PC-3 (cell line): ENCODE measurements at regions of chr13 and their contacts with region 1.

Region 1: GRCh38 chr13:38530492-38530891 is 156.4 kb upstream of the FREM2 start:
- DNase-seq: peak; percentile 33
- ATAC-seq: peak; percentile 65; the same call in 1 of the 2 replicates
- H3K4me3 ChIP-seq: no peak overlapping the region
- H3K27ac ChIP-seq: no peak overlapping the region
- H3K4me1 ChIP-seq: no peaks in the 10 kb centered on the region
- H3K27me3 ChIP-seq: peaks cover 36% of the 10 kb centered on the region
- CTCF ChIP-seq: peak; percentile 67

Region 2: GRCh38 chr13:37640499-37640898 is 890.0 kb before region 1 on chr13:
- CTCF ChIA-PET with region 1: no interaction called
- POLR2A ChIA-PET with region 1: no interaction called
- intact Hi-C with region 1: loop called (anchors 1 kb)
- DNase-seq: peak; percentile 58
- ATAC-seq: peak; percentile 80
- H3K4me3 ChIP-seq: no peak overlapping the region
- H3K27ac ChIP-seq: no peak overlapping the region
- H3K4me1 ChIP-seq: no peaks in the 10 kb centered on the region
- H3K27me3 ChIP-seq: peaks cover 18% of the 10 kb centered on the region
- CTCF ChIP-seq: peak; percentile 72

Region 3: GRCh38 chr13:37869756-37870488 is 660.6 kb before region 1 on chr13 and contains the start of gene TRPC4:
- CTCF ChIA-PET with region 1: no interaction called
- POLR2A ChIA-PET with region 1: no interaction called
- intact Hi-C with region 1: loop called (anchors 5 kb)
- DNase-seq: peak; percentile 54
- ATAC-seq: peak; percentile 83
- H3K4me3 ChIP-seq: peak within 1 kb of the TSS; percentile 62
- H3K27ac ChIP-seq: no peak within 1 kb of the TSS
- H3K4me1 ChIP-seq: peaks cover 15% of the 10 kb centered on the region
- H3K27me3 ChIP-seq: peaks cover 72% of the 10 kb centered on the region
- CTCF ChIP-seq: peak; percentile 60
- total RNA-seq, gene TRPC4: 0.22 TPM in 1 of 2 replicates, not detected in the other

Region 4: DNA sequence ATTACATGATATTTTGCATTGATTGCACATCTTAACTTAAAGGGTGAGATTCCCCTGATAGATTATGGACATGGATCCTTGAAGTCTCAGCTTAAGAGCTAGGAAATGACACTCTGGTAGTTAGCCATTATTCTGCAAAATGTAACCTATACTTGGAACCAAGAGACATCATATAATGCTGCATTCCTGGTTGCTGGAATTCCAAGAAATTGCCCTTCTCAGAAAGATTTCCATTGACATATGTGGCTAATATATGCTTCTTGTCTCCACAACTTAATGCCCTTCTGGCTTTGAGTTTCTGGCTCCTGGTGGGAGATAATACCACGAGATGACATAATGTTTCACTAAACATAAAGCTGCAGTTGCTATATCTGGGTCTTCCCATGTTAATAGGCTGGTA is 456.6 kb before region 1 on chr13:
- CTCF ChIA-PET with region 1: no interaction called
- POLR2A ChIA-PET with region 1: no interaction called
- intact Hi-C with region 1: loop called (anchors 1 kb)
- DNase-seq: no peak
- ATAC-seq: no peak
- H3K4me3 ChIP-seq: no peak overlapping the region
- H3K27ac ChIP-seq: no peak overlapping the region
- H3K4me1 ChIP-seq: no peaks in the 10 kb centered on the region
- H3K27me3 ChIP-seq: no peaks in the 10 kb centered on the region
- CTCF ChIP-seq: no peak

Region 5: DNA sequence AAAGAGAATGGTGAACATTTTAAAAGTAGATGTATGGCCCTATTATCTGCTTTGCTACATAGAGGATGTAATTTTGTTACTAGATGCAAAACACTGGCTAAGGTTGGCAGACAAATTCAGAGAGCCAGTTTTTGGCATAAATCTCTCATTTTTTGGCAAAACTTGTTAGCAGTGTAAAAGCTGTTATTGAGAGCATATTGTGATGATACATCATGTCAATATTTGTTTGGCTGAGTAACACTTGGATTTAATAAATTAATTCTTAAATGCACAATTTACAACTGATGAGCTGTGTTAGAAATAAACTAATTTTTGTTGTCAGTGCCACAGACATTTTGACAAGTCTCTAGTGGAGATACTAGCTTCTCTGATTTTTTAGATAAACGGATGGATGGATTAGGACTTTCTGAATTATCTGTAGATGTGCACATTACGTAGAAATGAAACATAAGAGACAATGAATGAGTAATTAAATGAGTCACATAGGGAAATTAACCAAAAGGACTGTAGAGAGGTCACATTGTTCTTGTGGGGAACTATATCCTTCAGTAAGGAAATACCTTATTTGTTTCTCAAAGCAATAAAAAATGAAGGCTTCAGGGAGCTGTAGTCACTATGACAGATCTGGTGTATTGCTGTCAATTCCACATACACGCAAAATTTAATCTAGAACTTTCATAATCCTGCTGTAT is 163.4 kb before region 1 on chr13:
- CTCF ChIA-PET with region 1: no interaction called
- POLR2A ChIA-PET with region 1: no interaction called
- intact Hi-C with region 1: loop called (anchors 5 kb)
- DNase-seq: peak; percentile 79
- ATAC-seq: peak; percentile 95
- H3K4me3 ChIP-seq: peak overlapping the region; percentile 21; the same call in 1 of the 2 replicates
- H3K27ac ChIP-seq: peak overlapping the region; percentile 97
- H3K4me1 ChIP-seq: peaks cover 22% of the 10 kb centered on the region
- H3K27me3 ChIP-seq: no peaks in the 10 kb centered on the region
- CTCF ChIP-seq: no peak